Psoas muscle (tissue), 8 donors: ENCODE measurements at regions of chr1 and their contacts with region 1.

Region 1: GRCh38 chr1:193104906-193105820 is at the start of gene GLRX2:
- DNase-seq: peak; percentile 88 to 93
- ATAC-seq: peak; percentile 94 to 96 (median 96)
- H3K4me3 ChIP-seq: peak within 1 kb of the TSS; percentile 93
- H3K27ac ChIP-seq: peak within 1 kb of the TSS; percentile 97
- H3K4me1 ChIP-seq: peaks cover 25% of the 10 kb centered on the region
- H3K27me3 ChIP-seq: no peaks in the 10 kb centered on the region
- CTCF ChIP-seq: no peak
- total RNA-seq, gene GLRX2: 41.3 to 68.1 (median 54.7) TPM

Region 2: DNA sequence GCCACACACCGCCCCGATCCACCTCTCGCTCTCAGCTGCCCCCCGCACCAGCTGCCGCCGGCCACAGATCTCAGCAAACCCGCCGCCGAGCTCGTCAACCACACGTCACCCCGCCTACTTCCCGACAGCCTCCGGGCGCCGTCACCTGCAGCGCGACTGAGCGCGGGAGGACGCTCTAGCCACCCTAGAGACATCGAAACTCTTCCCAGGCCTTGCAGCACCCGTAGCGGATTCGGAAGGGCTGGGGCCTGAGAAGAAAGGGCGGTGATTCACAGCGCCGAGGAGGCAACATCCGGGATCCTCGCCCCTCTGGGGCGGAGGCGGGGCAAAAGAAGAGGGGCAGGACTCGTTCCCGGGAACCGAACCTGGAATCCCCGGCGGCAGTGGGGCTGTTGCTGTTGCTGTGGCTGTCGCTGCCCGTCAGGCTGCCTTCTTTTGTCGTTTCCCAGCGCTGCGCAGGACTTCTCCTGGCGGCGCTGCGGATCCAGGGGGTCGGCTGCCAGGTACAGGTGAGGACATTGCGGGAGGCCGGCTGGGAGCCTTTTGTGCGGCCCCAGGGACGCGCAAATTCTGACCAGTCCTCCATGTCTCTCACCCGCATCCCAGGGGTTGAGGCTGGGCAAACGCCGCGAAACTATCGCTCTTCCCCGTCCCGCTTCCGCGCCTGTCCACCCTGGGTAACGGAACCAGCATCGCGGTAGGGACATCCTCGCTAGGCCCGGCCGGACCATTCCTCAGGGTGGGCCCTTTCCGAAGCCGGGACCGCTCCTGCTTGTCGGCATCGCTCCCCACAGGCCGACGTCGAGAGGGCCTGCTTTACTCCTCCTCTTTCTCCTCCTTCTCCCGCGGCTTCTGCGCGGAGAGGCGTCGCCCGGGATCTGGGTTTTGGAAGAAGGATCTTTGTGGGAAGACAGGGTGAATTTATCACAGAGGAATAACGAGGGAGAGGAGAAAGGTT is 45.6 kb before region 1 on chr1 and contains the starts of genes RO60 and UCHL5:
- intact Hi-C with region 1: loop called (anchors 2 to 5 kb)
- DNase-seq: peak; percentile 96 to 98
- ATAC-seq: peak; percentile 96 to 98 (median 98)
- H3K4me3 ChIP-seq: peak within 1 kb of the TSS; percentile 93
- H3K27ac ChIP-seq: peak within 1 kb of the TSS; percentile 99
- H3K4me1 ChIP-seq: peaks cover 47% of the 10 kb centered on the region
- H3K27me3 ChIP-seq: no peaks in the 10 kb centered on the region
- CTCF ChIP-seq: no peak
- total RNA-seq, gene RO60: 35.1 to 44.3 (median 39.7) TPM
- total RNA-seq, gene UCHL5: 28.3 to 43.3 (median 34.1) TPM